ENCODE measurements at regions of chr20 and their contacts with region 1.

Region 1: DNA sequence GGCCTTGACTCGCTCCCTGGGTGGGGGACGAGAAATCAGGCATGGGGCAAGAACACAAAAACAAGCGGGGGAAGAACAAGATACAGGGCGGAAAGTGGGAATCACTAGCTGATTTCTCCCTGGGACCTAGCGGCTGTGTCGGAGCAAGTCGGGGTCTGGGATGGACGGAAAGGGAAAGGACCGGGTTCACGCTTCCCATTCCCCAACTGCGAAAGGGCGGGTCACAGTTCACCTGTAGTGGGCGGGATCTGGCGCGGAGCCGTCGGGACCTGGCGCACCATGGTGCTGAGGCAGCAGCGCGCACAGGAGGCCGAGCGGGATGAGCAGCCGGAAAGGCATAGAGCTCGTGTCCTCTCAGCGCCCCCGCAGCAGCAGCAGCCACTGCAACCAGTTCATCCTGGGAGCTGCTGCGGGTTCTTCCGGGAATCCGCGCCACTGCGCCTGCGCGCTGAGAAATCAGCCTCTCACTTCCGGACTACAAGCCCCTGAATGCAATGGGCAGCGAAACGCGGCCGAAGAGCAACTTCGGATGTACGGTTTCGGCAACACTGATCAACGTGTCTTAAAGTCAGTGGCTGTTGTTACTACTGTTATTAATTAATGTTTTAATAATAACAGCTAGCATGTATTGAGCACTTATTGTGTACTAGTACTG is at the start of gene EDEM2:
- DNase-seq: peak; percentile 92 to 94 (median 93)
- H3K4me3 ChIP-seq: peak within 1 kb of the TSS; percentile 70
- H3K4me3 Mint-ChIP-seq: peak within 1 kb of the TSS; percentile 91 to 99 (median 98)
- H3K27ac ChIP-seq: peak within 1 kb of the TSS; percentile 70
- H3K27ac Mint-ChIP-seq: peak within 1 kb of the TSS; percentile 85 to 98 (median 96)
- H3K4me1 ChIP-seq: peaks cover 29% of the 10 kb centered on the region
- H3K4me1 Mint-ChIP-seq: peaks cover 25 to 46% (median 35%) of the 10 kb centered on the region in 4 donors
- H3K27me3 ChIP-seq: no peaks in the 10 kb centered on the region
- H3K27me3 Mint-ChIP-seq: no peaks in the 10 kb centered on the region
- total RNA-seq, gene EDEM2: 27.2 to 27.6 TPM

Region 2: DNA sequence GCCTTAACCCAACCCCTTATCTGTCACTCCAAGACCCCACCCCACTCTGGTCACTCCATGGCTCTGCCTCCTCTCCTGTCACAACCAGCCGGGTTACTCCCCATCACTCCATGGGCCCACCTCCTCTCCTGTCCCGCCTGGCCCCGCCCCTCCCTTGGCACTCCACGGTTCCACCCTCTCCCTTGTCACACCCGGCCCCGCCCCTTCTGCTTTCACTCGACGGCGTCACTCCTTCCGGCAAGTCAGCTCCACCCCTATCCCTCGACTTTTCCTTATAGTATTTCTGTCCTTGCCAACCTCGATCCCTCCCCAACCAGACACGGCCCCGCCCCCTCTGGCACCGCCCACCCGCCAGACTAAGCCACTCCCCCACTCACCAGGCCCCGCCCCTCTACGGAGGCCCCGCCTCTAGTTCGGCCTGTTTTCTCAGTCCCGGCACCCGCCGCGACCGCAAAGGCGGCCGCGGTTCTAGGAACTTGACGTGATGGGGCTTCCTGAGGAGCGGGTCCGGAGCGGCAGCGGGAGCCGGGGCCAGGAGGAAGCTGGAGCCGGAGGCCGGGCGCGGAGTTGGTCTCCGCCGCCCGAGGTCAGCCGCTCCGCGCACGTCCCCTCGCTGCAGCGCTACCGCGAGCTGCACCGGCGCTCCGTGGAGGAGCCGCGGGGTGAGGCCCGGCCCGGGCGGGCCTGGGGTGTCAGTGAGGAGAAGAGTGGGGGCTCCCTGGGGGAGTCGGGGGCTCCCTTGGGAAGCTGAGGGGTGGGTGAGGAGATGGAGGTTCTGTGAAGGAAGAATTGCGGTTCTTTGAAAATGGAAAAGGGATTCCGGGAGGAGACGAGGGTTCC is 270.7 kb before region 1 on chr20 and contains the start of gene ACSS2:
- CTCF ChIA-PET with region 1: no interaction called
- POLR2A ChIA-PET with region 1: interaction called, 3 read pairs
- intact Hi-C with region 1: loop called (anchors 5 kb)
- DNase-seq: peak; percentile 87 to 93 (median 89)
- H3K4me3 ChIP-seq: peak within 1 kb of the TSS; percentile 58 to 67
- H3K4me3 Mint-ChIP-seq: peak within 1 kb of the TSS; percentile 80 to 91 (median 89)
- H3K27ac ChIP-seq: peak within 1 kb of the TSS; percentile 37
- H3K27ac Mint-ChIP-seq: peak within 1 kb of the TSS; percentile 65 to 96 (median 92)
- H3K4me1 ChIP-seq: peaks cover 48% of the 10 kb centered on the region
- H3K4me1 Mint-ChIP-seq: peaks cover 36 to 66% (median 50%) of the 10 kb centered on the region in 4 donors
- H3K27me3 ChIP-seq: no peaks in the 10 kb centered on the region
- H3K27me3 Mint-ChIP-seq: no peaks in the 10 kb centered on the region
- total RNA-seq, gene ACSS2: 19.8 to 24.3 TPM

Region 3: DNA sequence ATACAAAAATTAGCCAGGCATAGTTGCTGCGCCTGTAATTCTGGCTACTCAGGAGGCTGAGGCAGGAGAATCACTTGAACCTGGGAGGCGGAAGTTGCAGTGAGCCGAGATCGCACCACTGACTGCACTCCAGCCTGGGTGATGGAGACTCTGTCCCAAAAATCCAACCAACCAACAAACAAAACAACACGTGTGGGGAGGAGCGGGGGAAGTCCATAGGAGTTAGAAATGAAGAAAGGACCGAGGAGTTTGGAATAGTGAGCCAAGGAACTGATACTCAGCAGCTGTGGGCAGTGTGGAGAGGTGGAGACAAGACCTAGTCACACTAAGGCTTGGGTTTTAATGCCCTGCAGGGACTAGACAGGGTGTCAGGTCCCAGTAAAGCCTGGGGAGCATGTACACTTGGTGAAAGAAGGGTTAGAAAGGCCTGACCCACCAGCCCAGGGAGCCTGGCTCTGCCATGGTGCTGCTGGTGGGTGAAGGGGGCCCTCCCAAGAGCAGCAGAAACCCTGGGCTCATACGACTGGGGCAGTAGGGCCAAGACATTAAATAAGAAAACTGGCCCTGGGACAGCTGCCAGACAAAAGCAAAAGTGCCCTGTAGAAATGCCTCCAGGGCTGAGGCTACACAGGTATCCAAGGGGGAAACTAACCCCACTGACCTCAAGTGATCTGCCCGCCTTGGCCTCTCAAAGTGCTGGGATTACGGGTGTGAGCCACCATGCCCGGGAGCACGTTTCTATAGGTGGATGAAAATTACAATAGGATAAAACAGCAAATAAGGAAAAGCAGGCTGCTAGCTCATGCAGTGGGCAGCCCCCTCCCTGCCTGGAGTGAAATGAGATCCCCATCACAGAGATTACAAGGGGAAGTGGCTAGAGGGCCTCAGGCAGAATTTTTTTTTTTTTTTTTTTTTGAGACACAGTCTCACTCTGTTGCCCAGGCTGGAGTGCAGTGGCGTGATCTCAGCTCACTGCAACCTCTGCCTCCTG is 133.3 kb before region 1 on chr20:
- CTCF ChIA-PET with region 1: no interaction called
- POLR2A ChIA-PET with region 1: no interaction called
- intact Hi-C with region 1: no loop called
- DNase-seq: no peak
- H3K4me3 ChIP-seq: no peak overlapping the region
- H3K4me3 Mint-ChIP-seq: no peak overlapping the region
- H3K27ac ChIP-seq: no peak overlapping the region
- H3K27ac Mint-ChIP-seq: peak overlapping the region in 1 of 7 donors; percentile 15
- H3K4me1 ChIP-seq: no peaks in the 10 kb centered on the region
- H3K4me1 Mint-ChIP-seq: no peaks in the 10 kb centered on the region
- H3K27me3 ChIP-seq: no peaks in the 10 kb centered on the region
- H3K27me3 Mint-ChIP-seq: no peaks in the 10 kb centered on the region

Region 4: DNA sequence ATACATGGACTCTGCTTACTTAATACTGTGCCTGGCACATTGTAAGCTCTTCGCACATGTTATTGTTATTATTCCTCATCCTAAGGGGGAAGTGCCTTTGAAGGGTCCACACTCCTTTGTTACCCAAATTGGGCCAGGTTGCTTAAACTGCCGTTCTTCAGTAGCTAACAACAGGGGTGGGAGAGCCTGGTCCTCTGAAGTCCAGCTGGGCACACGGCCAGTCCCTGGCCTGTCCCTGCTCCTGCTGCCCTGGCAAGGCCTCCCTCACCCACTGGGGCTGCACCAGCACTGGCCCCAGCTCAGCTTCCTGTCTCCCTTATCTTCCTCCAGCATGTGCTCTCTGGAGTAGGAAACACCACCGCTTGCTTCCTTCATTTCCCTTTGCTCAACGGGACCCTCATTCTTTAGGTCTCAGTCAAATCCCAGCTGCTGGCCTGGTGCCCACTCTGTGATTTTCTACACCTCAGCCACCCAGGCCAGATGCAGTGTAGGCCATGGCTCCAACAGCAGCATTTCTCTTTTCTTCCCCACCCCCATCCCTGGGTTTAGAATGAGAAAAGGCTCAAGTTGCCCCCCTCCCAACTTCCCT is 19.3 kb after region 1 on chr20:
- CTCF ChIA-PET with region 1: interaction called, 9 read pairs
- POLR2A ChIA-PET with region 1: interaction called, 33 read pairs
- intact Hi-C with region 1: no loop called
- DNase-seq: no peak
- H3K4me3 ChIP-seq: no peak overlapping the region
- H3K4me3 Mint-ChIP-seq: no peak overlapping the region
- H3K27ac ChIP-seq: no peak overlapping the region
- H3K27ac Mint-ChIP-seq: peak overlapping the region in 1 of 7 donors; percentile 42
- H3K4me1 ChIP-seq: peaks cover 5% of the 10 kb centered on the region
- H3K4me1 Mint-ChIP-seq: peaks cover 1 to 16% (median 7%) of the 10 kb centered on the region in 4 donors
- H3K27me3 ChIP-seq: no peaks in the 10 kb centered on the region
- H3K27me3 Mint-ChIP-seq: peaks cover 0 to 1% of the 10 kb centered on the region in 2 donors

Region 5: GRCh38 chr20:35226775-35227681 is 80.0 kb after region 1 on chr20:
- CTCF ChIA-PET with region 1: no interaction called
- POLR2A ChIA-PET with region 1: no interaction called
- intact Hi-C with region 1: no loop called
- DNase-seq: peak; percentile 25 to 57 (median 44)
- H3K4me3 ChIP-seq: no peak overlapping the region
- H3K4me3 Mint-ChIP-seq: peak overlapping the region; percentile 61 to 84 (median 74)
- H3K27ac ChIP-seq: no peak overlapping the region
- H3K27ac Mint-ChIP-seq: no peak overlapping the region
- H3K4me1 ChIP-seq: peaks cover 8% of the 10 kb centered on the region
- H3K4me1 Mint-ChIP-seq: peaks cover 4 to 16% (median 10%) of the 10 kb centered on the region in 4 donors
- H3K27me3 ChIP-seq: peaks cover 8% of the 10 kb centered on the region
- H3K27me3 Mint-ChIP-seq: peaks cover 24 to 29% of the 10 kb centered on the region in 2 donors

Region 6: DNA sequence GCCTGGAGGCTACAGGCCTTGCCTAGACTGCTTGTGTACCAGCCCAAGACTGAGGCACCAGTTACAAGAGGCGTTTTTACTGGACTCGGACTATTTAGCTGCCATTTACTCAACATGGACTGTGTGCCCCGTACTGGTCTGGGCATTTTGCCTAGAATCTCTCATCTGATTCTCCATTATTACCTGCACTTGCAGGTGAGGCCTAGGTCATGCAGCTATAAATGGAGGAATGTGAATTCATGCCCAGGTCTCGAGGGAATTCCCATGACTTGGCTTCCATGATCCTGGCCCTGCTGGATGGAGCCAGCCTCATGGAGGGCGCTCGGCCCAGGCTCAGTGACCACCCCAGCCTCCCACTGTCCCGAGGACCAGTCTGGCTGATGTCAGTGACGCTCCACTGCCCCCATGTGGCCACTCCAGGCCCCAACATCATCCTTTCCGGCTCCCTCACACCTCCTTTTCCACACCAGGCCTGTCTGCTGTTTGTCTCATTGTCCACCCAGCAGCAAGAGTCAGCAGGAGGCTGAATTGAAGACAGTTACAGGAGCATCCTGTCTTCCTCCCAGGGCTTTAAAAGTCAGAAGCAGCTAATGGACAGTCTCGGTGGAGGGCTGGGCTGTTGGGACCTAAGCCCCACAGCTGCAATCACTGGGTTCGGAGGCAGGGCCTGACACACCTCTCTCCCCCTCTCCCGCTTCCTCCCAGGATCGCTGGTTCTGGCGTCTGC is 122.2 kb after region 1 on chr20:
- CTCF ChIA-PET with region 1: interaction called, 12 read pairs
- POLR2A ChIA-PET with region 1: interaction called, 3 read pairs
- intact Hi-C with region 1: loop called (anchors 2 kb)
- DNase-seq: peak in 4 of 5 donors; percentile 28 to 44 (median 37)
- H3K4me3 ChIP-seq: no peak overlapping the region
- H3K4me3 Mint-ChIP-seq: no peak overlapping the region
- H3K27ac ChIP-seq: no peak overlapping the region
- H3K27ac Mint-ChIP-seq: peak overlapping the region in 2 of 7 donors; percentile 50 to 70
- H3K4me1 ChIP-seq: no peaks in the 10 kb centered on the region
- H3K4me1 Mint-ChIP-seq: peaks cover 6 to 14% (median 10%) of the 10 kb centered on the region in 4 donors
- H3K27me3 ChIP-seq: no peaks in the 10 kb centered on the region
- H3K27me3 Mint-ChIP-seq: no peaks in the 10 kb centered on the region

Region 7: GRCh38 chr20:35292376-35293285 is 145.6 kb after region 1 on chr20 and contains the start of gene FAM83C:
- CTCF ChIA-PET with region 1: no interaction called
- POLR2A ChIA-PET with region 1: no interaction called
- intact Hi-C with region 1: no loop called
- DNase-seq: no peak
- H3K4me3 ChIP-seq: no peak within 1 kb of the TSS
- H3K4me3 Mint-ChIP-seq: no peak within 1 kb of the TSS
- H3K27ac ChIP-seq: no peak within 1 kb of the TSS
- H3K27ac Mint-ChIP-seq: no peak within 1 kb of the TSS
- H3K4me1 ChIP-seq: no peaks in the 10 kb centered on the region
- H3K4me1 Mint-ChIP-seq: no peaks in the 10 kb centered on the region
- H3K27me3 ChIP-seq: no peaks in the 10 kb centered on the region
- H3K27me3 Mint-ChIP-seq: peaks cover 3 to 8% of the 10 kb centered on the region in 2 donors
- total RNA-seq, gene FAM83C: not detected

Region 8: GRCh38 chr20:35303735-35304491 is 156.9 kb after region 1 on chr20:
- CTCF ChIA-PET with region 1: interaction called, 6 read pairs
- POLR2A ChIA-PET with region 1: no interaction called
- intact Hi-C with region 1: loop called (anchors 1 kb)
- DNase-seq: peak; percentile 80 to 84 (median 82)
- H3K4me3 ChIP-seq: no peak overlapping the region
- H3K4me3 Mint-ChIP-seq: no peak overlapping the region
- H3K27ac ChIP-seq: no peak overlapping the region
- H3K27ac Mint-ChIP-seq: peak overlapping the region in 5 of 7 donors; percentile 18 to 76 (median 61)
- H3K4me1 ChIP-seq: peaks cover 6% of the 10 kb centered on the region
- H3K4me1 Mint-ChIP-seq: peaks cover 3 to 10% (median 5%) of the 10 kb centered on the region in 4 donors
- H3K27me3 ChIP-seq: no peaks in the 10 kb centered on the region
- H3K27me3 Mint-ChIP-seq: no peaks in the 10 kb centered on the region